ENCODE measurements at regions of chr9 and their contacts with region 1.

Region 1: DNA sequence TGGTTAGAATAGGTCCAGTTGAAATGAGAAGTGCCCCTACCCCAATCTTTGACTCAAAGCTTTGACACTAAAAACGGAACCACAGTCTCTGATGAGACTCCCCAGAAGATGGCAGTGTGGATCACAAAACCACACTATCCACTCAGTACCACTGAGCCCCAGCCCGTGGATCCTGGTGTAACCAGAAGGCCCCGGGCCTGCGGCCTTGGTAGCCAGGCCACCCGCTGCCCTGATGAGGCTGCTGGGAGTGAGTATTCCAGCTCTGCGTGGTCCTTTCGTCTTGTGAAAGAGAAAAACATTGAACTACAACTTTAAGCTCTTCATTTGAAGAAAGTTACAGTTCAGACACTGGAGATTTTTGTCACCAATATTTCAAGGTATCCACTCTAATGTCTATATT is 42.2 kb upstream of the FBP1 start:
- DNase-seq: peak; percentile 66
- H3K4me3 Mint-ChIP-seq: no peak overlapping the region
- H3K27ac Mint-ChIP-seq: no peak overlapping the region
- H3K4me1 Mint-ChIP-seq: peaks cover 9% of the 10 kb centered on the region
- H3K27me3 Mint-ChIP-seq: peaks cover 12% of the 10 kb centered on the region
- CTCF ChIP-seq: peak; percentile 37

Region 2: GRCh38 chr9:94805585-94805984 is 124.1 kb after region 1 on chr9:
- CTCF ChIA-PET with region 1: no interaction called
- intact Hi-C with region 1: no loop called
- DNase-seq: peak; percentile 75
- H3K4me3 Mint-ChIP-seq: peak overlapping the region; percentile 39
- H3K27ac Mint-ChIP-seq: peak overlapping the region; percentile 99
- H3K4me1 Mint-ChIP-seq: peaks cover 57% of the 10 kb centered on the region
- H3K27me3 Mint-ChIP-seq: no peaks in the 10 kb centered on the region
- CTCF ChIP-seq: no peak

Region 3: DNA sequence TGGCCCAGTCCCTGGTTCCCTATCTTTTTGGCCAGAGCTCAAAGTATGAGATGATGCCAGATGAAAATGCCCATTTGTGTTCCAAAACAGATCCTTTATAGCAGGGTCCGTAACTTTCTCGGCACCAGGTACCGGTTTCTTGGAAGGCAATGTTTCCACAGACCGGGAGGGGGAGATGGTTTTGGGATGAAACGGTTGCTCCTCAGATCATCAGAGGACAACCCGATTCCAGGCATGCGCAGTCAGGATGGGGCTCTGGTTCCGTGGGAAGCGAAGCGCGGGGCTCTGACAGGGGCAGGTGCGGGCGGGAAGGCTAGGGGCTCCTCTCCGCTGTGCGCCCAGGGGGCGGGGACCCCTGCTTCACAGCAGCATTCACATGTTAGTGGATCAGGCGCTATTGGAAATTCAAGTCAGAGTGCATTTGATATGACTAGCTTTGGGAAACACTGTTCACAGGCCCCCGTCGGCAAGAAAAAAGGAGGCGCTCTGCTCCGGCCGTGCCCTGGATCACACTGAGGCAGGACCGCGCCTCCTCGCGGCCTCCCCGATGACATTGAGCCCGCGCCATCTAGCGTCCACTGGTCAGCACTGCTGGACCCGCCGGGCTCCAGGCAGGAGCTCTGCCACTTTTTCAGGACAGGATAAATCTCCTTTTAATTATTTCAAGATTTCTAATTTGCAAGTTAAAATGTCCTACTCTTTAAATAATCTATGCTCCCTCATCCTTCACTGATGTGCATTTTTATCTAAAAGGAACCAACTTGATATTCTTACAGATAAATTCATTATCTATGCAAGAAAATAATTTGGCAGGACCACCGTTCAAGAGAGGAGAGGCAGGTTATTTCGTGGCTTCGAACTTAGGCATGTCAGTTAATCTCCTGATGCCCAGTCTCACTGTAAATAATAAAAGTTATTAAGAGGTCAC is 446.0 kb after region 1 on chr9:
- CTCF ChIA-PET with region 1: interaction called, 11 read pairs
- intact Hi-C with region 1: loop called (anchors 1 kb)
- DNase-seq: peak; percentile 80
- H3K4me3 Mint-ChIP-seq: no peak overlapping the region
- H3K27ac Mint-ChIP-seq: no peak overlapping the region
- H3K4me1 Mint-ChIP-seq: peaks cover 19% of the 10 kb centered on the region
- H3K27me3 Mint-ChIP-seq: no peaks in the 10 kb centered on the region
- CTCF ChIP-seq: peak; percentile 79

Measured in Calu3 (cell line).